ENCODE measurements at regions of chr17 and their contacts with region 1.

Region 1: DNA sequence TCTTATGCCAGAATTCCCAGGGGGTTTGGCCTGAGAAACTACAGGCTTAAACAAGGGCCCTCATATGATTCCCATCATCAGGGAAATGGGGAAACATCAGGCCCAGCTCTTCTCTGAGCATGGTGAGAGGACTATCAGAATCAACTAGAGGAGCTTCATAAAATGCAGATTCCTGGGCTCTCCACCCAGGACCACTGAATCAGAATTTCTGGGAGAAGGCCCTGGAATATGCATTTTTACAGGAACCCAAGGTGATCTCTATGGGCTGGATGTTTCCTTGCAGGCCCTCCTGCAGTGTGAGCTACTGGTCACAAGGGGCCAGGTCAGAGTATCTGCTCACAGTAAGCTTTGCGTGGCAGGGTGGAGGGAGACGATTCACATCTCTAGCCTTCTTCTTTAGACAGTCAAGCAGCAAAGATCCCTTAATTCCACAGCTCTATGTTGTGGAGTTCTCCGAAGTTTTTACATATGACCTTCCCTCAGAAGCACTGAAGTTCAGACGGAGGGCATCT is 38.8 kb upstream of the HOXB13 start:
- DNase-seq: no peak

Region 2: DNA sequence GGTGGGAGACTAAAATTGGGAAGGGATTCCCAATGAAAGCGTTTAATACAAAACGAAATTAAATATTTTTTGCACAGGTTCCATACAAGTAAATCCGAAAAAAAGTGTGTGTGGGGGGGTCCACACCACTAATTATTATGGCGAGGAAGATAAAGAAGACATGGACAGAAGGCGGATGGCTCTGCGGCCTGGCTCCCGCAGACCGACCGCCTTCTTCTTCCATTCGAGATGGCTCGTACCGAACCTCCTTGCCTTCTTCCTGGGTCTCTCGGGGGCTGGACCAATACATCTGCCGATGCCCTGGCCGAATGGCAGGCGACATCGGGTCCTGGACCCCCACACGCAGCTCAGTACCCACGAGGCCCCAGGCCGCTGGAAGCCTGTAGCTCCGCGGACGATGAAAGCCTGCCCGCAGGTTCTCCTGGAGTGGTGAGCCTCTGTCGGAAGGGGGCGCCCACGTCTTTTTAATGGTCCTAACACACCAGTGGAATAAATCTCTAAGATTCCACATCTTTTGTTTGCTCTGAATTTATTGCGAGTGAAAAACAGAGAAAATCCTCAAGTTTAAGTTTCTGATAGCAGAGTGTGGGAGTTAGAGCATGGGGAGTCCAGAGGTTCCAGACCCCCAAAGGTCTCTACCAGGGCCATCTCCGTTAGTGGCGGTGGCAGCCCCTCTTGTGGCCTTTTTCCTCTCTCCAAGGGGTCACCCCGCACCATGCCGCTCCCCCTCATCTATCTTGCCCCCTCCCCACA is 42.9 kb before region 1 on chr17:
- in situ Hi-C with region 1: loop called (anchors 5 kb)
- DNase-seq: peak; percentile 76

Region 3: GRCh38 chr17:48804925-48805411 is 37.6 kb after region 1 on chr17:
- in situ Hi-C with region 1: no loop called
- DNase-seq: peak; percentile 49

Region 4: DNA sequence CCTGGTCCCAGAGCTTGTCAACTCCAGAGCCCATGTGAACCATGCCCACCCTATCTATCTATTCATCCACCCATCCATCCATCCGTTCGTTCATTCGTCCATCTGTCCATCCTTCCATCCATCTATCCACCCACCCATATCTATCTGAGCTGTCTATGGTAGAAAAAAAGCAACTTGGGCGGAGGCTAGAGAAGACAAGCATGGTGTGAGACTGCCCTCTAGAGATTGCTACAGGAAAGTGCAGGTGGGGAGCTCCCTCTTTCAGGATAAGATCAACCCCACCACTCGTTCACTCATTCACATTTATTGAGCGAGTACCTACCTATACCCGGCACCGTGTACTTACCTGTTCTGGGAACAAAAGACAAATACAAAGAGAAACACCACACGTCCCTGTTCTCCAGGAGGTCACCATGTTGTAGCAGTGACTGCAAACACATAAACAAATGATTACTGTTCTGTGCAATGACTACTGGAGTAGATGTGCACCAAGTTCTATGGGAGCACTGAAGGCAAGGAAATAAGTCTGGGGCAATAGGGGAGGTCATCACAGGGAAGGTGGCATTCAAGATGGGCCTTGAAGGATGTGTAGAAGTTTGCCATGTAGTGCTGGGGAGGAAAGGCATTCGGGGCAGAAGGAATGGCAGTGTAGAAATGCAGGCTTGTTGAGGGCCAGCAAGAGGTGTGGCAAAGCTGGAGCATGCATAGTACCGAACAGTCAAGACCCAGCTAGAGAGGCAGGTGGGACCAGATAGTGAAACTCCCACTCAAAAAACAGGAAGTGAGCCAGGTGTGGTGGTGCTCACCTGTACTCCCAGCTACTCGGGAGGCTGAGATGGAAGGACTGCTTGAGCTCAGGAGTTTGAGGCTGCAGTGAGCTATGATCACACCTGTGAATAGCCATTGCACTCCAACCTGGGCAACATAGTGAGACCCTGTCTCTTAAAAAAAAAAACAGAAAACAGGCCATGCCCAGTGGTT is 111.9 kb after region 1 on chr17:
- in situ Hi-C with region 1: no loop called
- DNase-seq: peak; percentile 71

Measured in G401 (cell line).